Activated B cell treated with CpG ODN at 0.5 μM for 24 hours (primary cell): ENCODE measurements at regions of chr3 and their contacts with region 1.

Region 1: DNA sequence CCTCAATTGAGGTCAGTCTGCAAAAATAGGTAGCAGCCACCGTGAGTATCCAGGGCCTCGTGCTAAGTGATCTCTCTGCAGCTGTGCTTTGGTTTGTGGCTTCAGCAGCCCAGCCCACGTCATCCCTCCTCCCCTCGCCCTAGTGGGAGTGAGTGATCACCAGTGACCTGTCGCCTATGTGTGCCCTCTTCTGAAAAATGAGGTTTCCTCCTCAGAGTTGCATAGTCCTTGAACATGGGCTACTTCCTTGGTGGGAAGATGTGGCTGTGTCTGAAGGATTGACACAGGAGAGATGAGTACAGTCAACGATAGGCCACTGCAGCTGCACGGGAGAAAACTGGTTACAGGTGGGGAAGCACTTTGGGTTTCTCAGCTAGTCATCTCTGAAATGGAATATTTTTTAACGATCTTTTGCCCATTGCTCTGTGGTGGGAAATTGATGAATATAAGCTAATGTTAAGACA is 144.8 kb upstream of the BHLHE40 start:
- DNase-seq: no peak
- ATAC-seq: peak; percentile 56
- H3K4me3 Mint-ChIP-seq: no peak overlapping the region
- H3K27ac Mint-ChIP-seq: peak overlapping the region; percentile 59
- H3K4me1 Mint-ChIP-seq: peaks cover 68% of the 10 kb centered on the region
- H3K27me3 Mint-ChIP-seq: no peaks in the 10 kb centered on the region
- CTCF ChIP-seq: no peak

Region 2: GRCh38 chr3:4030624-4031023 is 803.8 kb before region 1 on chr3:
- CTCF ChIA-PET with region 1: no interaction called
- POLR2A ChIA-PET with region 1: no interaction called
- intact Hi-C with region 1: no loop called
- DNase-seq: no peak
- ATAC-seq: no peak
- H3K4me3 Mint-ChIP-seq: no peak overlapping the region
- H3K27ac Mint-ChIP-seq: no peak overlapping the region
- H3K4me1 Mint-ChIP-seq: no peaks in the 10 kb centered on the region
- H3K27me3 Mint-ChIP-seq: no peaks in the 10 kb centered on the region
- CTCF ChIP-seq: no peak

Region 3: DNA sequence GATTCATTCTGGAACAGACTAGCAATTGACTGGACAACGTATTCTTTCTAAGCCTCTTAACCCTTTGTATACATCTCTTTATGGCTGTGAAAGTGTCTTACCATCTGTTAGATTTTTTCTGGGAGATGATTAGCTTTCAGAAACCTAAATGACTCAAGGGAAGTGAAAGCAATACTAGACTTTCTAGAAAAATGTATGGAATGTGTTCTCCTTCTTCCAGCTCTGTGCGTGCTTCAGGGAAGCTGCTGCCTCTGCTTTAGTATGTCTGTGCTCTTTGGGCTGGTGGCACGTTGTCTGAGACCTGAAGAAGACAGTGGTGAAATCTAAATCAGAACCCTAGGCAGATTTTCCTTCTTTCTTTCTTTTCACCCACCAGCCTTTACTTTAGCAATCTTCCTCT is 251.8 kb before region 1 on chr3:
- CTCF ChIA-PET with region 1: no interaction called
- POLR2A ChIA-PET with region 1: no interaction called
- intact Hi-C with region 1: no loop called
- DNase-seq: no peak
- ATAC-seq: no peak
- H3K4me3 Mint-ChIP-seq: no peak overlapping the region
- H3K27ac Mint-ChIP-seq: no peak overlapping the region
- H3K4me1 Mint-ChIP-seq: peaks cover 76% of the 10 kb centered on the region
- H3K27me3 Mint-ChIP-seq: no peaks in the 10 kb centered on the region
- CTCF ChIP-seq: no peak

Region 4: GRCh38 chr3:4730719-4731118 is 103.7 kb before region 1 on chr3:
- CTCF ChIA-PET with region 1: no interaction called
- POLR2A ChIA-PET with region 1: no interaction called
- intact Hi-C with region 1: no loop called
- DNase-seq: no peak
- ATAC-seq: no peak
- H3K4me3 Mint-ChIP-seq: no peak overlapping the region
- H3K27ac Mint-ChIP-seq: no peak overlapping the region
- H3K4me1 Mint-ChIP-seq: no peaks in the 10 kb centered on the region
- H3K27me3 Mint-ChIP-seq: no peaks in the 10 kb centered on the region
- CTCF ChIP-seq: no peak

Region 5: GRCh38 chr3:4776980-4777581 is 57.4 kb before region 1 on chr3:
- CTCF ChIA-PET with region 1: no interaction called
- POLR2A ChIA-PET with region 1: no interaction called
- intact Hi-C with region 1: loop called (anchors 2 kb)
- DNase-seq: no peak
- ATAC-seq: peak; percentile 80
- H3K4me3 Mint-ChIP-seq: no peak overlapping the region
- H3K27ac Mint-ChIP-seq: peak overlapping the region; percentile 70
- H3K4me1 Mint-ChIP-seq: peaks cover 18% of the 10 kb centered on the region
- H3K27me3 Mint-ChIP-seq: no peaks in the 10 kb centered on the region
- CTCF ChIP-seq: no peak

Region 6: GRCh38 chr3:4823986-4824925 is 10.2 kb before region 1 on chr3:
- CTCF ChIA-PET with region 1: no interaction called
- POLR2A ChIA-PET with region 1: no interaction called
- intact Hi-C with region 1: no loop called
- DNase-seq: no peak
- ATAC-seq: no peak
- H3K4me3 Mint-ChIP-seq: no peak overlapping the region
- H3K27ac Mint-ChIP-seq: no peak overlapping the region
- H3K4me1 Mint-ChIP-seq: peaks cover 72% of the 10 kb centered on the region
- H3K27me3 Mint-ChIP-seq: no peaks in the 10 kb centered on the region
- CTCF ChIP-seq: no peak

Region 7: GRCh38 chr3:4880850-4881249 is 46.4 kb after region 1 on chr3:
- CTCF ChIA-PET with region 1: no interaction called
- POLR2A ChIA-PET with region 1: interaction called, 8 read pairs
- intact Hi-C with region 1: loop called (anchors 5 kb)
- DNase-seq: no peak
- ATAC-seq: no peak
- H3K4me3 Mint-ChIP-seq: no peak overlapping the region
- H3K27ac Mint-ChIP-seq: no peak overlapping the region
- H3K4me1 Mint-ChIP-seq: no peaks in the 10 kb centered on the region
- H3K27me3 Mint-ChIP-seq: peaks cover 3% of the 10 kb centered on the region
- CTCF ChIP-seq: no peak

Region 8: GRCh38 chr3:5026331-5027218 is 192.1 kb after region 1 on chr3:
- CTCF ChIA-PET with region 1: interaction called, 3 read pairs
- POLR2A ChIA-PET with region 1: no interaction called
- intact Hi-C with region 1: loop called (anchors 2 kb)
- DNase-seq: peak; percentile 57
- ATAC-seq: peak; percentile 72
- H3K4me3 Mint-ChIP-seq: peak overlapping the region; percentile 84
- H3K27ac Mint-ChIP-seq: peak overlapping the region; percentile 78
- H3K4me1 Mint-ChIP-seq: peaks cover 39% of the 10 kb centered on the region
- H3K27me3 Mint-ChIP-seq: no peaks in the 10 kb centered on the region
- CTCF ChIP-seq: no peak

Region 9: GRCh38 chr3:5187156-5187919 is 352.9 kb after region 1 on chr3 and contains the start of gene EDEM1:
- CTCF ChIA-PET with region 1: no interaction called
- POLR2A ChIA-PET with region 1: no interaction called
- intact Hi-C with region 1: loop called (anchors 10 kb)
- DNase-seq: peak; percentile 100
- ATAC-seq: peak; percentile 88
- H3K4me3 Mint-ChIP-seq: peak within 1 kb of the TSS; percentile 98
- H3K27ac Mint-ChIP-seq: peak within 1 kb of the TSS; percentile 99
- H3K4me1 Mint-ChIP-seq: peaks cover 73% of the 10 kb centered on the region
- H3K27me3 Mint-ChIP-seq: no peaks in the 10 kb centered on the region
- CTCF ChIP-seq: no peak
- total RNA-seq, gene EDEM1: 171 and 185 TPM in 2 replicates